Right ventricle myocardium inferior (tissue), 1 donor: ENCODE measurements at regions of chr3 and their contacts with region 1.

Region 1: GRCh38 chr3:50652709-50653108 is 22.0 kb upstream of the DOCK3 start:
- DNase-seq: no peak
- ATAC-seq: peak; percentile 38

Region 2: GRCh38 chr3:50568947-50569749 is 83.6 kb before region 1 on chr3 and contains the start of gene HEMK1:
- intact Hi-C with region 1: loop called (anchors 5 kb)
- DNase-seq: peak; percentile 99
- ATAC-seq: peak; percentile 90
- total RNA-seq, gene HEMK1: 14.0 TPM

Region 3: GRCh38 chr3:50624632-50625031 is 28.1 kb before region 1 on chr3:
- intact Hi-C with region 1: loop called (anchors 1 kb)
- DNase-seq: no peak
- ATAC-seq: no peak